ENCODE measurements at regions of chr3 and their contacts with region 1.

Region 1: DNA sequence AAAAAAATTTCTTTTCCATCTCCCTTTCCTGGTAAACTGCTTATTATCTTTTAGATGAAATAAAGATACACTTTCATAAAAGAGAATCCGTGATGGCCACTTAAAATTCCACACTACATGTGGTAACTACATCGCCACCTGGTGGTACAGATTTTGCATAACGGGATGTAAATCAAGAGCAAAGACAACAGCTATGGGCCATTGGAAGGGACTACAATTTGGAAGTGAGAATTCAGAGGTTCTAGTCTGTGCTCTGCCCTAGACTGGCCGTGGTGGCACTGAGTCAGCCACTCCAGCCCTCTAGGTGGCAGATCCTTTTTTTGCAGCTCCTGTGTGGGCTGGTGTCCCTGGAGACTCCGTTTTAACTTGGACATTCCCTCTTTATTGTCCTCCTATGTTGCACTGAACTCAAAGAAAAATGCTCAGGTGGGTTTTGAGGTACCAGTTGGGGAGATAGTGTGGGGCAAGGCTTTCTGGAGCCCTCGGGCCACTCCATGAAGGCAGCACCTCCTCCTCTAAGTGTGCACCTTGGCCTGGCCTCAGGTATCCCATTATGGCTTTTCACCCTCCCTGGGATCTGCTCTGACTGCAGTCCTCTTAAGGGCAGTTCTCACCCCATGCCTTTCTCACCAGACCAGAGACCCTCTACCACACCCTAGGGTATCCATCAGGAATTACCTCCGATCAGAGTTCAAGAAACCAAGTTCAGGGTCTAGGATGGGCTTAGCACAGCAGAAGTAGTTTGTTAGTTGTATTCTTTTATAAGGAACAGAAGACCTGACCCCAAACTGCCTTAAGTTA is 54.9 kb downstream of the SPSB4 start:
- DNase-seq: peak; percentile 26 to 69 (median 40)
- H3K4me3 ChIP-seq: no peak overlapping the region
- H3K4me3 Mint-ChIP-seq: no peak overlapping the region
- H3K27ac ChIP-seq: no peak overlapping the region
- H3K27ac Mint-ChIP-seq: no peak overlapping the region
- H3K4me1 ChIP-seq: no peaks in the 10 kb centered on the region
- H3K4me1 Mint-ChIP-seq: no peaks in the 10 kb centered on the region
- H3K27me3 ChIP-seq: no peaks in the 10 kb centered on the region
- H3K27me3 Mint-ChIP-seq: peaks cover 6% of the 10 kb centered on the region in 2 donors

Region 2: GRCh38 chr3:141000027-141000663 is 105.9 kb before region 1 on chr3:
- CTCF ChIA-PET with region 1: interaction called, 13 read pairs
- POLR2A ChIA-PET with region 1: no interaction called
- DNase-seq: peak; percentile 13 to 58 (median 27)
- H3K4me3 ChIP-seq: no peak overlapping the region
- H3K4me3 Mint-ChIP-seq: no peak overlapping the region
- H3K27ac ChIP-seq: no peak overlapping the region
- H3K27ac Mint-ChIP-seq: no peak overlapping the region
- H3K4me1 ChIP-seq: no peaks in the 10 kb centered on the region
- H3K4me1 Mint-ChIP-seq: peaks cover 2 to 5% (median 4%) of the 10 kb centered on the region in 3 donors
- H3K27me3 ChIP-seq: no peaks in the 10 kb centered on the region
- H3K27me3 Mint-ChIP-seq: peaks cover 3 to 12% of the 10 kb centered on the region in 2 donors